ENCODE measurements at regions of chr1 and their contacts with region 1.

Region 1: DNA sequence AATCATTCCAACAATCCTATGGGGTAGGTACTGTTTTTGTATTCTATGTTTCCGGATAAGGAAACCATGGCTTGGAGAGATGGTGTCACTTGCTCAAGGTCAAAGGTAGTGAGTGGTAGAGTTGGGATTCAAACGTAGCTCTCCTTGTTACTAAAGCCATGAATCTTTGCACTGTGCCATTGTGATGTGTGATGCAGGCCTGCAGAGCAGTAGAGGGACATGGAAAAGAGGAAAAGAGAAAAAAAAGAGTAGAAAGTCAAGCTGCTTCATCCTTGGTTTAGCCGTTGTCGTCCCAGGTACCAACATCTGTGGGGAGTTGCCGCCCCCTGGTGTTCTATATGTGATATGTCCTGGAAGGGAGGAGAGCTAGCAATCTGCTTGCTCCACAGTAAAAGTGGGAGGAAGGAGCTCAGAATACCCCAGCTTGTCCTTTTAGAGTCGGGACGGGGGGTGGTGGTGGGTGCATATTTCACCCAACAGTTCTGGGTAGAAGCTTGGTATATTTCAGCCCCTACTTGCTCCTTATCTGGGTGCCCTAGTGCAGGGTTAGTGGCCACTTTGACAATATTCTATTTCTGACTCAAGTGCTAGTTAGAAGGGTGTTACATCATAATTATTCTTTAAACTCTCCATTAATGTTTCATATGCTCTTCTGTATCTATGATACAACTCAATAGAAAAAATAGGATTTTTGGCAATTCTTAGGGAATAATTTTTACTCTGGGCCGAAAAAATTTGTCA is 98.4 kb downstream of the EBNA1BP2 start:
- DNase-seq: peak; percentile 61
- ATAC-seq: peak; percentile 95
- H3K4me3 ChIP-seq: no peak overlapping the region
- H3K27ac ChIP-seq: no peak overlapping the region
- H3K4me1 ChIP-seq: peaks cover 9 to 42% of the 10 kb centered on the region in 2 experiments; a peak in 3 of 4 replicates
- H3K27me3 ChIP-seq: no peaks in the 10 kb centered on the region
- CTCF ChIP-seq: peak; percentile 78 to 95 (median 88)
- POLR2A ChIP-seq: no peak
- RAD21 ChIP-seq: peak; percentile 99

Region 2: GRCh38 chr1:42576935-42577334 is 496.7 kb before region 1 on chr1:
- CTCF ChIA-PET with region 1: interaction called, 11 read pairs
- POLR2A ChIA-PET with region 1: no interaction called
- RAD21 ChIA-PET with region 1: interaction called in 1 of 2 experiments, 3 read pairs
- intact Hi-C with region 1: loop called (anchors 10 kb)
- DNase-seq: no peak
- ATAC-seq: no peak
- H3K4me3 ChIP-seq: no peak overlapping the region
- H3K27ac ChIP-seq: no peak overlapping the region
- H3K4me1 ChIP-seq: no peaks in the 10 kb centered on the region
- H3K27me3 ChIP-seq: no peaks in the 10 kb centered on the region
- CTCF ChIP-seq: no peak
- POLR2A ChIP-seq: no peak
- RAD21 ChIP-seq: no peak

Region 3: GRCh38 chr1:42777852-42778251 is 295.8 kb before region 1 on chr1:
- CTCF ChIA-PET with region 1: interaction called, 96 read pairs
- POLR2A ChIA-PET with region 1: interaction called, 5 read pairs
- RAD21 ChIA-PET with region 1: interaction called, 9 to 14 read pairs
- intact Hi-C with region 1: loop called (anchors 1 kb)
- DNase-seq: no peak
- ATAC-seq: peak; percentile 87
- H3K4me3 ChIP-seq: no peak overlapping the region
- H3K27ac ChIP-seq: no peak overlapping the region
- H3K4me1 ChIP-seq: no peaks in the 10 kb centered on the region
- H3K27me3 ChIP-seq: no peaks in the 10 kb centered on the region
- CTCF ChIP-seq: peak; percentile 61 to 90 (median 76); a peak in 5 of 6 replicates
- POLR2A ChIP-seq: no peak
- RAD21 ChIP-seq: peak; percentile 90

Region 4: GRCh38 chr1:42913426-42914091 is 160.1 kb before region 1 on chr1:
- CTCF ChIA-PET with region 1: interaction called, 267 read pairs
- POLR2A ChIA-PET with region 1: interaction called, 10 read pairs
- RAD21 ChIA-PET with region 1: interaction called, 72 to 86 read pairs
- intact Hi-C with region 1: loop called (anchors 1 kb)
- DNase-seq: peak; percentile 78
- ATAC-seq: peak; percentile 96
- H3K4me3 ChIP-seq: no peak overlapping the region
- H3K27ac ChIP-seq: no peak overlapping the region
- H3K4me1 ChIP-seq: peaks cover 0 to 3% of the 10 kb centered on the region in 2 experiments; a peak in 1 of 4 replicates
- H3K27me3 ChIP-seq: no peaks in the 10 kb centered on the region
- CTCF ChIP-seq: peak; percentile 73 to 84 (median 77)
- POLR2A ChIP-seq: no peak
- RAD21 ChIP-seq: peak; percentile 91

Region 5: DNA sequence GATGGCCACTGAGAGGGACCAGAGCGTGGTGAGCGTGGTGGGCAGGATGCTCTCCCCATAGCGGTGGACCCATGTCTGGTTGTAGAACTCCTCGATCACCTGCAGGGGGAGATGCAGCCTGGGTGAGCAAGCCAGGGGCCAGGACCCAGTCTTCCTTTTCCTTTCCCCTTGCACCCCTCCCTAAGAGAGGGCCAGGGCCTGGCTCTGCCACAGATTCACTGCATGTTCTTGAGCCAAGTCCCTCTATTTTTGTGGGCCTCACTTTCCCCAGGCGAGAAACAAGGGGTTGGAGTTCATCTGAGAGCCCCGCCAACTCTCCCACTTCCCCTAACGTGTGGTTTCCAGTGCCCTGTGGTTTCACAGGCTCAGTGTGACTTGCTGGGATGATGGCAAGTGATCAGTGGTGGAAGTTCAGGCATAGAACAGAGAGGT is 142.5 kb before region 1 on chr1:
- CTCF ChIA-PET with region 1: interaction called, 21 read pairs
- POLR2A ChIA-PET with region 1: interaction called, 3 read pairs
- RAD21 ChIA-PET with region 1: interaction called, 3 to 6 read pairs
- intact Hi-C with region 1: loop called (anchors 1 kb)
- DNase-seq: no peak
- ATAC-seq: peak; percentile 72
- H3K4me3 ChIP-seq: no peak overlapping the region
- H3K27ac ChIP-seq: peak overlapping the region; percentile 76
- H3K4me1 ChIP-seq: peaks cover 43 to 69% of the 10 kb centered on the region in 2 experiments
- H3K27me3 ChIP-seq: no peaks in the 10 kb centered on the region
- CTCF ChIP-seq: peak in 2 of 3 experiments; percentile 69 to 71; a peak in 4 of 6 replicates
- POLR2A ChIP-seq: no peak
- RAD21 ChIP-seq: no peak

Region 6: DNA sequence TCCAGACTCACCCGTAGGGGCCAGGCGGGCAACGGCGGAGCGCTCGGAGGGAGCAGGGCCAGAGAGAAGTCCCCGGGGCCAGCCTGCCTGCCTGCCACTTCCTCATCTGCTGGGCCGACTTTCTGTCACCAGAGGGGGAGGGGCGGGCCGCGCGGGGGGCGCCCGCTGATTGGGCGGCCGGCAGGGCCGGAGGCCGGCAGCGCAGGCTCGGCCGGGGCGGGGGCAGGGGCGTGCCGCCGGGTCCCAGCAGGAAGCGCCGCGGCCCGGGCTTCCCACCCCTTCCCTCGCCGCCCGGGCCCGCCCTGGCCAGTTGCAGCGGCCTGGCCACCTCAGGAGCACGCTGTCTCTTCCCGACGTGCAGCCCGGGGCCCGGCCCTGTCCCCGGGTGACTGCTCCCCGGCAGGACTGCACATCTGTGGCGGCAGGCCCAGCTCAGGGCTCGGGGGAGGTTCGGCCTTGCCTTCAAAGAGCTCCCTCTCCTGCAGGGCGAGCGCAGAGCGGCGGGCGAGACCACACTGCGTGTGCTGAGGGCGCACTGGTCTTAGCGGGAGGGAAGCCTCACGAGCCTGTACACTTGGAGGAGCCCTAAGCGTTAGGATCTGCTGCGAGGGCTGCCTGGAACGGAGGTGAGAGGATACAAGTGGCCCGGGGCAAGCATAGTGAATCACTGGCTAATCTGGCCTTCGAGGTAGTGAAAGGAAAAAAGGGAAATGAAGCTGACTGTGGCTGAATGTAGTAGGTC is 294.4 kb after region 1 on chr1 and contains the start of gene ELOVL1:
- CTCF ChIA-PET with region 1: no interaction called
- POLR2A ChIA-PET with region 1: no interaction called
- RAD21 ChIA-PET with region 1: no interaction called
- intact Hi-C with region 1: no loop called
- DNase-seq: peak; percentile 61
- ATAC-seq: peak; percentile 73
- H3K4me3 ChIP-seq: peak within 1 kb of the TSS; percentile 75 to 98
- H3K27ac ChIP-seq: peak within 1 kb of the TSS; percentile 98
- H3K4me1 ChIP-seq: peaks cover 26 to 83% of the 10 kb centered on the region in 2 experiments
- H3K27me3 ChIP-seq: no peaks in the 10 kb centered on the region
- CTCF ChIP-seq: 0 out of 6 replicates have a peak, but pooled peaks of 1 of the 3 experiments have one; percentile 10
- POLR2A ChIP-seq: peak; percentile 92
- RAD21 ChIP-seq: no peak
- total RNA-seq, gene ELOVL1: 91.3 TPM

Region 7: GRCh38 chr1:43414634-43415223 is 341.1 kb after region 1 on chr1:
- CTCF ChIA-PET with region 1: interaction called, 11 read pairs
- POLR2A ChIA-PET with region 1: no interaction called
- RAD21 ChIA-PET with region 1: interaction called in 1 of 2 experiments, 3 read pairs
- intact Hi-C with region 1: no loop called
- DNase-seq: peak; percentile 48
- ATAC-seq: peak; percentile 96
- H3K4me3 ChIP-seq: no peak overlapping the region
- H3K27ac ChIP-seq: no peak overlapping the region
- H3K4me1 ChIP-seq: no peaks in the 10 kb centered on the region
- H3K27me3 ChIP-seq: no peaks in the 10 kb centered on the region
- CTCF ChIP-seq: peak; percentile 69 to 77 (median 74); a peak in 5 of 6 replicates
- POLR2A ChIP-seq: no peak
- RAD21 ChIP-seq: peak; percentile 89